ENCODE measurements at regions of chr9 and their contacts with region 1.

Region 1: DNA sequence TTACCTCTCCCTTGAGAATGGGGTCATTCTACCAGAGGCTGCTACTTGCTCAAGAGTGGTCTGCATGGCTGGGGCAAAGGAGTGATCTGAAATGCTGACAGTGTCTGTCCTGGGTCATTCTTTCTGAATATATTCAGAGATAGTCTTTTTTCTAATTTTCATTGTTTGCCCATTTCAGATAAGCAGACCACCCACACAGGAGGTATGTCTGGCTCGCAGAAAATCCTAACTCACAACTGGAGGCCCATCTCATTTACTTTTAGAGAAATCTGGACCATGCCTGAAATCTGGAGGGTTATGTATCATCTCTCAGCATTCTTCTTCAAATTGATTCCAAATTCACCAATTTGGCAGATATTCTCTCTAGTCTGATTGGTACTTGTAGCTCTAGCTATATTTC is 227.6 kb downstream of the SEC61B start:
- DNase-seq: no peak
- H3K4me3 ChIP-seq: no peak overlapping the region
- H3K4me3 Mint-ChIP-seq: no peak overlapping the region
- H3K27ac ChIP-seq: no peak overlapping the region
- H3K27ac Mint-ChIP-seq: no peak overlapping the region
- H3K4me1 ChIP-seq: no peaks in the 10 kb centered on the region
- H3K4me1 Mint-ChIP-seq: no peaks in the 10 kb centered on the region
- H3K27me3 ChIP-seq: no peaks in the 10 kb centered on the region
- H3K27me3 Mint-ChIP-seq: peaks cover 2 to 10% (median 4%) of the 10 kb centered on the region in 3 donors
- CTCF ChIP-seq: no peak

Region 2: GRCh38 chr9:99421369-99421768 is 28.4 kb before region 1 on chr9:
- intact Hi-C with region 1: loop called in 1 of 2 experiments (anchors 2 kb)
- DNase-seq: no peak
- H3K4me3 ChIP-seq: no peak overlapping the region
- H3K4me3 Mint-ChIP-seq: no peak overlapping the region
- H3K27ac ChIP-seq: no peak overlapping the region
- H3K27ac Mint-ChIP-seq: no peak overlapping the region
- H3K4me1 ChIP-seq: peaks cover 0 to under 1% of the 10 kb centered on the region in 2 donors
- H3K4me1 Mint-ChIP-seq: peaks cover 2% of the 10 kb centered on the region
- H3K27me3 ChIP-seq: no peaks in the 10 kb centered on the region
- H3K27me3 Mint-ChIP-seq: peaks cover 0 to 5% (median 1%) of the 10 kb centered on the region in 3 donors
- CTCF ChIP-seq: no peak

Region 3: DNA sequence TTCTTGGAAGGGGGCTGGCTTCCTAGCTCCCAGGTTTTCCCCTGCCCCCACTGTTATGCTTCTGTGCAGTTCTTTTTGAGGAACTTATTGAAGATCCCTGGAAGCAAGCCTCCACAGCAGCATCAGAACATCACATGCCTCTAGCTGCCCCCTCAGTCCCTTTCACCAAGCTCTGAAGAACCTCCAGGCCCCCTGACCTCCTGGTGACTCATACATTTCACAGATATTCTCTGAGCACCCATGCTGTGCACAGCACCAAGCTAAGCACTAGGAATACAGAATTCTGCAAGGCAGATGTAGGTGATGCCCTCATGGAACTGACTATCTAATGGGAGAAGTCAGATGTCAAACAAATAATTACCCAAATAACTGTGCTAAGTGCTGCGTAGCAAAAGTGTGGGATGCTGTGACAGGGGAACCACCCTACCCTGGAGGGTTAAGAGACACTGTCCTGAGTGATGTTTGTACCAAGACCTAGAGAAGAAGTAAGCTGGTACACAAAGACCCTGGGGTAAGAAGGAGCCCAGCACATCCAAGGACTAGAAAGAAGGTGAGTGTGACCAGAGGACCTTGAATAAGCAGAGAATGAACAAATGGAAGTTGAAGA is 158.2 kb after region 1 on chr9:
- intact Hi-C with region 1: no loop called
- DNase-seq: no peak
- H3K4me3 ChIP-seq: no peak overlapping the region
- H3K4me3 Mint-ChIP-seq: no peak overlapping the region
- H3K27ac ChIP-seq: no peak overlapping the region
- H3K27ac Mint-ChIP-seq: peak overlapping the region in 2 of 7 donors; percentile 68 to 70
- H3K4me1 ChIP-seq: no peaks in the 10 kb centered on the region
- H3K4me1 Mint-ChIP-seq: no peaks in the 10 kb centered on the region
- H3K27me3 ChIP-seq: no peaks in the 10 kb centered on the region
- H3K27me3 Mint-ChIP-seq: peaks cover 0 to 6% (median 4%) of the 10 kb centered on the region in 3 donors
- CTCF ChIP-seq: no peak